PC-9 (cell line): ENCODE measurements at regions of chr17 and their contacts with region 1.

Region 1: DNA sequence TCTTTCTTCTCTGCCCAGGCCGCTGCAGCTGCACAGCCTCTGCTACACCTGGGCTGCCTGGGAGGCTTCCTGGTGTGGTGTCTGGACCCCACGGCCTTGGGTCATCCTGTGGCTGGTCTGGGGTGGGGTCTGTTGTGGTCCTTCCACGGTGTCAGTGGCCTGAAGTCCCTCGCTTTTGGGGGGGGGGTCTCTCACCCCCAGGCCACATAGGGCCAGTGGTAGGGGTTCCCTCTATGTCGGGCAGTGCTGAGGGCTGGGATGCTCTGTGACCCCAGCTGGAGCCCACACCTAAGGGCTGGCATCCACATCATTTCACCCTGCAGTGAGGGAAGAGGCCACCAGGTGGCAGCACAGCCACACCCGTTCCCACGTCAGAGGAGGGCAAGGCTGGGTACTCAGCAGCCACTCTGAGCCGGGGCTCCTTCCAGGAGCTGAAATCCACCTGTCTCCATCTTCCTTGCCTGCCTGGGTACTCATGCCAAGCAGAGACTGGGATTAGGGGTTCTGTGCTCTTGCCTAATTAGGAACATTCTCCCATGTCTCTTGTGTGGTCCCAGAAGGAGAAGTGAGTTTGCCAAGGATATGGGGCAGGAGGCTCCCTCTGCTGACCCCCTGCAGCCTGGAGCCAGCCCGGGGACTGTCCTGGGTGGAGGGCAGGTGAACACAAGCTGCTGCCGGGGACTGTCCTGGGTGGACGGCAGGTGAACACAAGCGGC is 13.0 kb downstream of the ENGASE start:
- DNase-seq: peak in 1 of 2 experiments; percentile 77
- H3K4me3 ChIP-seq: no peak overlapping the region
- H3K27ac ChIP-seq: no peak overlapping the region
- H3K4me1 ChIP-seq: no peaks in the 10 kb centered on the region
- H3K27me3 ChIP-seq: peaks cover 5% of the 10 kb centered on the region; the same call in 1 of the 2 replicates
- CTCF ChIP-seq: peak; percentile 85

Region 2: GRCh38 chr17:78840725-78841611 is 246.6 kb before region 1 on chr17 and contains the start of gene USP36:
- CTCF ChIA-PET with region 1: no interaction called
- POLR2A ChIA-PET with region 1: no interaction called
- intact Hi-C with region 1: no loop called
- DNase-seq: peak; percentile 89 to 99
- H3K4me3 ChIP-seq: peak within 1 kb of the TSS; percentile 95
- H3K27ac ChIP-seq: peak within 1 kb of the TSS; percentile 85
- H3K4me1 ChIP-seq: peaks cover 13% of the 10 kb centered on the region
- H3K27me3 ChIP-seq: no peaks in the 10 kb centered on the region
- CTCF ChIP-seq: no peak
- total RNA-seq, gene USP36: 41.4 and 46.2 TPM in 2 replicates

Region 3: DNA sequence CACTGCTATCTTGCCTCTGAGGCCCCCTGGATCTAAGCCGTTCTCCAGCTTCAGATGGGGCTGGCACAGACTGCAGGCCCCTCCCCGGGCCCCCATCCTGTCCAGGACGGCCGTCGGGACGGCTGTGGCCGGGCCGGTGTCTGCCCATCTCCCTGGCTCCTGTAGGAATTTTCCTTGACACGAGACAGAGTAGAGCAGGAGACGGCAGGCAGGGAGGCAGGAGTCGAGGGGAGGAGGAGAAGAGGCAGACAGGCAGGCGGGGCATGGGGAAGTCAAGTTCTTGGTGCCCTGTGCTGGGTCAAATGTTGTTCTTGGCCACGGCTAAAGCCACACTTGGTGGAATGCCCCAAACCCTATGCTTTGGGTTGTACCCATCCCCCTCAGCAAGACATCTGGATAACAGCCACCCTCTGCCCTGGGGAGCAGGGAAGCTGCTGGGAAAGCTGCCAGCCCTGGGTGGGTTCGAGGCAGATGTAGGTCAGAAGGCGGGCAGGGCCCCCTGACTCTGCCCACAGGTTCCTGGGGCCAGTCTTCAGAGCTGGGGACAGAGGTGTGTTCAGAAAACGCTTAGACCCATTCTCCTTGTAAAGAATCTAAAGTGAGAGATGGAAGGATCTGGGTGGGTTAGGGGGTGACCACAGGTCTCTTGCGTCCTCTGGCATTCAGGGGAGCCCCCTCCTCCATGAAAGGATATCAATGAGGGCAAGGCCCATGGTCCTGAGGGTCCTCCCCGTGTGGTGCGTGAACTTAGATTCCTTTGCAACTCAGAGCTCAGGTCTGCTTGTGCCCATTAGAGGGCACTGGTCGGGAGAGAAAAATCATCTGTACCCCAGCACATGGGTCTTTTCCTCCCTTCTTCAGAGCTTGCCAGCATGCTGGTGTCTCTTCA is 59.4 kb before region 1 on chr17:
- CTCF ChIA-PET with region 1: interaction called, 16 read pairs
- POLR2A ChIA-PET with region 1: no interaction called
- intact Hi-C with region 1: no loop called
- DNase-seq: peak in 1 of 2 experiments; percentile 35
- H3K4me3 ChIP-seq: no peak overlapping the region
- H3K27ac ChIP-seq: no peak overlapping the region
- H3K4me1 ChIP-seq: peaks cover 37% of the 10 kb centered on the region
- H3K27me3 ChIP-seq: no peaks in the 10 kb centered on the region
- CTCF ChIP-seq: no peak

Region 4: DNA sequence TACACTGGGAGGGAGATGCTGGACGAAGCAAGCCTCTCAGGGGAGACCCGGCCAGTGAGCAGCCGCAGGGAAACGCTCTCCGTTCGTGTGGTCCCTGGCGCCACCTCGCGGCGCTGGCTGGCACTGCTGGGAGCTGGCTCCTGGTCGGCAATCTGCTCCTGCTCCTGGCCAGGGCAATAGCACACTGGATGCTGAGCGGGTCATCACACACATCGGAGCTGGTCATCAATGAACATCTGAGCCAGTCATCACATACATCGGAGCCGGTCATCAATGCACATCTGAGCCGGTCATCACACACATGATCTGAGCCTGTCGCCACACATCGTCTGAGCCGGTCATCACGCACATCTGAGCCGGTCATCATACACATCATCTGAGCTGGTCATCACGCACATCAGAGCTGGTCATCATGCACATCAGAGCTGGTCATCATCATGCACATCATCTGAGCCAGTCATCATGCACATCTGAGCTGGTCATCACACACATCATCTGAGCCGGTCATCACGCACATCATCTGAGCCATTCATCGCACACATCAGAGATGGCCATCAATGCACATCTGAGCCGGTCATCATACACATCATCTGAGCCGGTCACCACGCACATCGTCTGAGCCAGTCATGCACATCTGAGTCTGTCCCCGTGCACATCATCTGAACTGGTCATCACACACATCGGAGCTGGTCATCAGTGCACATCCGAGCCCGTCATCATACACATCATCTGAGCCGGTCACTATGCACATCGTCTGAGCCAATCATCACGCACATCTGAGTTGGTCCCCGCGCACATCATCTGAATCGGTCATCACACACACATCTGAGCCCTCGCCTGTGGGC is 306.0 kb after region 1 on chr17:
- CTCF ChIA-PET with region 1: interaction called, 13 read pairs
- POLR2A ChIA-PET with region 1: no interaction called
- intact Hi-C with region 1: loop called (anchors 1 kb)
- DNase-seq: peak in 1 of 2 experiments; percentile 74
- H3K4me3 ChIP-seq: no peak overlapping the region
- H3K27ac ChIP-seq: no peak overlapping the region
- H3K4me1 ChIP-seq: no peaks in the 10 kb centered on the region
- H3K27me3 ChIP-seq: peaks cover 60% of the 10 kb centered on the region
- CTCF ChIP-seq: peak; percentile 79

Region 5: DNA sequence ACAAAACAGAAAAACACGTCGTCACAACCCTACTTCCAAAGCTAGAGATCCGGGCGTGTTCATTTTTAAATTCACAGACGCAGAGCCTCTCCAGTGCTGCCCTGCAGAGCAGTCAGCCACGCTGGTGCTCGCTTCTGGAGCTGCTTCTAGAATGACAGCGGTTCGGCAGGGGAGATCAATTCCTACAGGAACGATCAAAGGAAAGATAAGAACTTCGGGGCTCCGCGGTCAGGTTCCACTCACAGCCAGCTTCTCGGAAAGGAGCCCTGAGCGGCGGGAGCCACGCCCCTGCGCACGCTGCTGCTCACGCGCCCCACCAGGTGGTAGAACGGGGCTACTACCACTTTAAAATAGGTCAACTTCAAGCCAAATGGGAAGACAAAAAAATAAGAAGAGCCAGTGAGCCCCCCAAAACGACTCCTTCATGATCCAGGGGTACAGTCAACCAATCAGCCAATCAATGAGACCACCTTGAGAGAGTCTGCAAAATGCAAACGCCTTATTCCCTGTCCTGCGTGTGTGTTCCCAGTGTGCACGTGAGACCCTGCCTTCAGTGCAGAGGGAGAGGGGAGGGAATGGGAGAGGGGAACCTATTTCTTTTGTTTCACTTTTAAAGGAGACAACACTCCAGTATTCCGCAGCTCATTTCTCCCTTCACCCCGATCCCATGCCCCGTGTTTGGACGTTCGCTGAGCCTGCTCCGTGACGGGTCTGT is 313.6 kb after region 1 on chr17:
- CTCF ChIA-PET with region 1: interaction called, 13 read pairs
- POLR2A ChIA-PET with region 1: no interaction called
- intact Hi-C with region 1: no loop called
- DNase-seq: peak in 1 of 2 experiments; percentile 57
- H3K4me3 ChIP-seq: no peak overlapping the region
- H3K27ac ChIP-seq: no peak overlapping the region
- H3K4me1 ChIP-seq: no peaks in the 10 kb centered on the region
- H3K27me3 ChIP-seq: peaks cover 59% of the 10 kb centered on the region
- CTCF ChIP-seq: peak; percentile 72

Region 6: DNA sequence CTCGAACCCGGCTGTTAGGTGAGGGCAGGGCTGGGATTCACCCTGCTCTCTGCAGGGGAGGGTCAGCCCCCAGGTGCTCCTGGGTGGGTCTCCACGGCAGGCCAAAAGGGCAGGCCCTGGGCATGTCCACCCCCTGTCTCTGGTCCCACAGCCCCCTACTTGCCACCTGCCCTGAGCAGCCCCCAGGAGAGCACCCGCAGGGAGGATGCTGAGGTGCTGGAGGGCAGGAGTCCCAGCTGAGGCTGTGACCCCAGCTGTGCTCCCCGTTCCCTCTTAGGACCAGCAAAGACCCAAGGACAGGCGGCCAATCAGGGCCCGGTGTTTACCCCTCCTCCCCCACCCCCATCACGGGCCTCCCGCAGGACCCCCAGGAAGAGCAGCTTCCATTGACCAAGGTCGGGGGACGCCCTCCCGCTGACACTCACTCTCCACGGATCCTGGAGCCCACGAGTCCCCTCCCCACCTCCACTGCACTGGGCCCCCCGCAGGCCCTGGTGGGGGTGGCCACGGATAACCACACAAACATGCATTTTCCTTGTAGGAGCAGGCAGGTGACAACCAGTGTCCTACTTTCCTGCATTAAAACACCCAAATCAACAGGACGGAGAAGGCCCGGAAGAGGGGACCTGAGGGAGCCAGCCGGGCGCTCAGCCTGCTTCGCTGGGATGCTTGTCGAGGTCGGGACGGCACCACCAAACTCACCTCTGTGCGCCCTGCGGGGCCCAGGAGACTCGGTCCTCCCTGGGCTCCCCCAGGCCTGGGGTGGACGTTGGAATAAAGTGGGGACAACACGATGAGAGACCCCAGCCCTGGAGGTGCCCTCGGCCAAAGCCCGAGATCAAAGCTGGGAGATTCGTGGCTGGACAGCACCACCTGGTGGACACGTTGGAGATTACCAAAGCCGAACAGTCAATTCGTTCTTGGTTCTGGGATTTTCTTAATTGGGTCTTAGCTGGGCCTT is 620.6 kb after region 1 on chr17:
- CTCF ChIA-PET with region 1: interaction called, 7 read pairs
- POLR2A ChIA-PET with region 1: no interaction called
- intact Hi-C with region 1: loop called (anchors 1 kb)
- DNase-seq: peak in 1 of 2 experiments; percentile 46
- H3K4me3 ChIP-seq: no peak overlapping the region
- H3K27ac ChIP-seq: no peak overlapping the region
- H3K4me1 ChIP-seq: no peaks in the 10 kb centered on the region
- H3K27me3 ChIP-seq: 0 out of 2 replicates have a peak, but pooled peaks cover 9% of the 10 kb centered on the region
- CTCF ChIP-seq: peak; percentile 80